MCF 10A (cell line): ENCODE measurements at regions of chr5 and their contacts with region 1.

Region 1: DNA sequence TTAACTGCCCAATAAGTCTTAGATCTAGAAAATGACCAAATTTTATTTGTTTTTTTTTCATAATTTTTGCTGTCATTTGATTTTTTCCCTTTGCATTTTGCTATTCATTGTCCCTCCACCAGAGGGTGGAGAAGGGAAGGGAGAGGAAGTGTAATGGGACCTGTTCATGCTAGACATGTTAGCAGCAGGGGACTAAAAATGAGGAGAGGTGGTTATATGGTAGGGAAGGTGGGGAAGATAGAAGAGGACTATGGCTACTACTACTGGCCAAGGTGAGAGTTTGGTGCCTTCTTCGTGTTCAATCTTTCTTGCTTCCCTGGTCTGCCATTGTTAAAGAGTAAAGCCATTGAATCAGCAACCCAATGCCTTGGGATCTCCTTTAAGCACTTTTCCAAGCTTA is 6.4 kb downstream of the GRIA1 start:
- DNase-seq: peak; percentile 75
- H3K4me3 Mint-ChIP-seq: no peak overlapping the region
- H3K27ac Mint-ChIP-seq: no peak overlapping the region
- H3K4me1 Mint-ChIP-seq: no peaks in the 10 kb centered on the region
- H3K27me3 Mint-ChIP-seq: no peaks in the 10 kb centered on the region
- CTCF ChIP-seq: peak; percentile 97

Region 2: DNA sequence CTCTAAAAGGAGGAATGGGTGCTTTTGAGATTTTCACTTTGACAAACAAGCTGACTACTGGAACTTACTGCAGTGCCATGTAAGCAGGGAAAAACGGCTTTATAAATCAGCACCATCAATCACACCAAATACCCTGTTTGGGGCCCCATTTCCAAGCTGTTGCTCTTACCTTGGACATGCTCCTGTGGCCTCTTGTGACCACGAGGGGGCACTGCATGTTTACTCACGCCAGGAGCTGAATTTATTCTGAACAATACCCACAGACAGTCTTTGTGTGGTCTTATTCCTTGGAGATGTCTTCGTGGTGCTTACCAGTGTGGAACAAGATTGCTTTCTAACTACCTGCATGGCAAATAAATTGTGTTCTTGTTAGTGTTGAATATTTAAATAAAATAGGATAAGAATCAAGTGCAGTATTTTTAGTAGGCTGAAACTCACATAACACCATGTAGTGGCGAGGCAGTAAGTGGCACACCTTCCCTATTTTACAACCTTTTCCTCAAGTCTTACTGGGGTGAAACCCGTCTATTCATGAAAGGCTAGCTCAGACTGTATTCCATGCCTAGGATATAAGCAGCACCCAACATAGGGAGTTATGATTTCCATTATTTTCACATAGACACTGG is 936.2 kb before region 1 on chr5:
- CTCF ChIA-PET with region 1: interaction called, 5 read pairs
- POLR2A ChIA-PET with region 1: no interaction called
- intact Hi-C with region 1: loop called (anchors 2 kb)
- DNase-seq: peak; percentile 82
- H3K4me3 Mint-ChIP-seq: no peak overlapping the region
- H3K27ac Mint-ChIP-seq: no peak overlapping the region
- H3K4me1 Mint-ChIP-seq: no peaks in the 10 kb centered on the region
- H3K27me3 Mint-ChIP-seq: no peaks in the 10 kb centered on the region
- CTCF ChIP-seq: peak; percentile 96

Region 3: GRCh38 chr5:153551537-153552079 is 54.8 kb after region 1 on chr5:
- CTCF ChIA-PET with region 1: interaction called, 12 read pairs
- POLR2A ChIA-PET with region 1: interaction called, 3 read pairs
- intact Hi-C with region 1: loop called (anchors 5 kb)
- DNase-seq: peak; percentile 90
- H3K4me3 Mint-ChIP-seq: peak overlapping the region; percentile 37
- H3K27ac Mint-ChIP-seq: peak overlapping the region; percentile 94
- H3K4me1 Mint-ChIP-seq: peaks cover 55% of the 10 kb centered on the region
- H3K27me3 Mint-ChIP-seq: no peaks in the 10 kb centered on the region
- CTCF ChIP-seq: no peak

Region 4: GRCh38 chr5:153690236-153690635 is 193.4 kb after region 1 on chr5:
- CTCF ChIA-PET with region 1: no interaction called
- POLR2A ChIA-PET with region 1: no interaction called
- intact Hi-C with region 1: loop called (anchors 5 kb)
- DNase-seq: no peak
- H3K4me3 Mint-ChIP-seq: no peak overlapping the region
- H3K27ac Mint-ChIP-seq: no peak overlapping the region
- H3K4me1 Mint-ChIP-seq: no peaks in the 10 kb centered on the region
- H3K27me3 Mint-ChIP-seq: no peaks in the 10 kb centered on the region
- CTCF ChIP-seq: no peak

Region 5: DNA sequence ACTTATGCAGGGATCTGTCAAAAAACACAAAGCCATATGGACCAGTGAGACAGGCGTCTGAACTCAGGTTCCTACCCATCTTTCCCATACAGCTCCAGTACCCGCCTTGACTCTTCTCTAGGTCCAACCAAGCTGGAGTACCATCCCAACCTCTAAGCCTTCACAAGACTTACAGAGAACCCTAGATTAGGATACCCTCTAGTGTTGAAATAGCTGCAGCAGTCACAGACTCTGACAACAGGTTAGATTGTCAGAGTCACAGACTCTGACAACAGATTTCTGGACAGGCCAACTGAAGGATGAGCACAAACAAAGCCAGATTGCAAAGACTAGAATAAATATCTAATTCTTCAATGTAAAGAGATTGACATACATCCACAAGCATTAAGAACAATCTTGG is 259.7 kb after region 1 on chr5:
- CTCF ChIA-PET with region 1: interaction called, 81 read pairs
- POLR2A ChIA-PET with region 1: interaction called, 3 read pairs
- intact Hi-C with region 1: loop called (anchors 1 kb)
- DNase-seq: peak; percentile 32
- H3K4me3 Mint-ChIP-seq: no peak overlapping the region
- H3K27ac Mint-ChIP-seq: no peak overlapping the region
- H3K4me1 Mint-ChIP-seq: peaks cover 15% of the 10 kb centered on the region
- H3K27me3 Mint-ChIP-seq: no peaks in the 10 kb centered on the region
- CTCF ChIP-seq: peak; percentile 31

Region 6: DNA sequence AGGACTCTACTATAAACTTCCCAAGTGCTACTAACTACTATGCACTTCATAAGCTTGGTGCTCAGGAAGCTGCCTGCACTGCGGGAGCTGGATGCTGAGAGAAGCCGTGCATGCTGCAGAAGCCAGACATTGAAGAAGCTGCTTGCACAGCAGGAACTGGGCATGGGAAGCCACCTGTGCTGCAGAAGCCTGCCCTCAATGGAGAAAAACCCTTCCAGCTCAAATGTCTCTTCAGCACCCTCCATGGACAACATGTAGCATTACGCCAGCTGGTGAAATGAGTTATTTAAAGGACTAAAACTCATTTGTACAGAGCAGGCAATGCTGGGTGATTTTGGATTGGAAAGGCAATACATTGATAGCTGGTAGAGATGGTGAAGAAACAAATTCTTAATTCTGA is 1764.0 kb after region 1 on chr5:
- CTCF ChIA-PET with region 1: no interaction called
- POLR2A ChIA-PET with region 1: no interaction called
- intact Hi-C with region 1: no loop called
- DNase-seq: peak; percentile 16
- H3K4me3 Mint-ChIP-seq: no peak overlapping the region
- H3K27ac Mint-ChIP-seq: no peak overlapping the region
- H3K4me1 Mint-ChIP-seq: no peaks in the 10 kb centered on the region
- H3K27me3 Mint-ChIP-seq: no peaks in the 10 kb centered on the region
- CTCF ChIP-seq: peak; percentile 33